PC-3 (cell line): ENCODE measurements at regions of chr2 and their contacts with region 1.

Region 1: DNA sequence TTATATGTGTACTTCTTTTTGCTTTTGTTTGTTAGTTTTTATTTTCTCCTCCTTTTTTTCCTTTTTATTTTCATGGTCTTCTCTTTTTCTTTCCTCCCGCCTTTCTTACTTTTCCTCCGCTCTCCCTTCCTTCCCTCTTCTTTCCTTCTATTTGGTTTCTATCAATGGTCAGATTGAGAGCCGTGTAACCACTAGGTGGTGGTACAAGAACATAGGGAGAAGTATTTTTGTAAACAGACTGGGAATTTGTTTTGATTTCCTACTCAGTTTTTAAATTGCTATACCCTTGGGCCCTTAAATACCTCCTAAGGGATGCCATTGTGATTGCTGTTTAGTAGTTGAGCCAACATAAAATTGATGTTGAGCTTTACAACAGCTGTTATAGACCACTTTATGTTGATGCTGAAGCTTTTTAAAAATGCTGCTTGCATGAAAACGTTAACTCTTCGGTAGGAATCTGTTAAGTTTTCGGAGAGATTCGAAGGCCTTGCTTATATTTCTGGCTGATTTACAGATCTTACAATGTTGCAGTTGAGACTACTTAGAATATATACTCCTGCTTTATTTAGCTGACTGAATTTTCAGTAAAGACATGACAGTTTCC is 124.2 kb downstream of the UBE2E3 start:
- DNase-seq: peak; percentile 81
- ATAC-seq: peak; percentile 59
- H3K4me3 ChIP-seq: no peak overlapping the region
- H3K27ac ChIP-seq: no peak overlapping the region
- H3K4me1 ChIP-seq: peaks cover 33% of the 10 kb centered on the region
- H3K27me3 ChIP-seq: no peaks in the 10 kb centered on the region
- CTCF ChIP-seq: peak; percentile 95

Region 2: GRCh38 chr2:180495606-180496005 is 609.0 kb before region 1 on chr2:
- CTCF ChIA-PET with region 1: no interaction called
- POLR2A ChIA-PET with region 1: no interaction called
- intact Hi-C with region 1: no loop called
- DNase-seq: peak; percentile 85
- ATAC-seq: peak; percentile 98
- H3K4me3 ChIP-seq: no peak overlapping the region
- H3K27ac ChIP-seq: peak overlapping the region; percentile 62
- H3K4me1 ChIP-seq: peaks cover 14% of the 10 kb centered on the region
- H3K27me3 ChIP-seq: no peaks in the 10 kb centered on the region
- CTCF ChIP-seq: no peak

Region 3: GRCh38 chr2:181312515-181312927 is 207.9 kb after region 1 on chr2:
- CTCF ChIA-PET with region 1: no interaction called
- POLR2A ChIA-PET with region 1: no interaction called
- intact Hi-C with region 1: loop called (anchors 10 kb)
- DNase-seq: no peak
- ATAC-seq: no peak
- H3K4me3 ChIP-seq: no peak overlapping the region
- H3K27ac ChIP-seq: no peak overlapping the region
- H3K4me1 ChIP-seq: no peaks in the 10 kb centered on the region
- H3K27me3 ChIP-seq: no peaks in the 10 kb centered on the region
- CTCF ChIP-seq: no peak

Region 4: DNA sequence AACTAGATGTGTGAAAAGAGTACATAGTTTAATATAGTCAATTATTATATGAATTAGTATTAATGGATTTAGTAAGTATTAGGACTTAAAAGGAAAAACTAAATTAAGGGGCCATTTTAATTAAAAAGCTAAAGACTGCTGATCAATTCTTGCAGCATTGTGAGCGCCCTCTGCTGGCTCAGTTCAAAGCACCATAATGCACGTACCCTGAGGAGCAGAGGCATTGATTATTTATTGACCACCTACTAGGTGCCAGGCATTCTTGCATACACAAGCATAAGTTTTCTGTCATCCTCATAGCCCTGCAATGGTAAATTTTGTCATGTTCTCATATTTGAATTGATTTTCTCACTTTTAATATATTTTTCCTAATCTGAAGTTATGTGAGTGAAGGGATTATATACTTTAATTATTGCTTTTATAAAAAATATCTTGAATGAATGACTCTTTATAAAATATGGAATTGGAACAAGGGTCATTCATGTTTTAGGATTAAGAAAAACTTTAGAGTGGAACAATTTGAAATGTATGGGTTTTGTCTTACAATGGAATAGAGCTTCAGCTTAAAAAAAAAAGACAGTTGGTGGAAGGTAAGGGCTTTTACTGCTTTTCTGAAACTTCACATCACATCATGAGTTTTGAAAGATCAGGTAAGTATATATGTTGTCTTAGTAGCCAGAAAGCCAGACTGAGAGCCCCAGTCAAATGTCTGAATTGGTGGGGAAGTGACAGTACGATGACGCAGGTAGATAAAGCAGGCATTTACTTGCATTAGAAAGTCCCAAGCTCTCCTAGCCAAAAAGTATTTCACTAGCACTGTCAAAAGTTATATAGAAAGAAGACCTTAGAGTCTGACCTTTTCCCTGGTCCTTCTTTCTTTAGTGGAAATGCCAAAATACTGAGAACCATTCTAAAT is 362.3 kb after region 1 on chr2:
- CTCF ChIA-PET with region 1: interaction called, 3 read pairs
- POLR2A ChIA-PET with region 1: no interaction called
- intact Hi-C with region 1: loop called (anchors 1 kb)
- DNase-seq: peak; percentile 67
- ATAC-seq: peak; percentile 50; the same call in 1 of the 2 replicates
- H3K4me3 ChIP-seq: no peak overlapping the region
- H3K27ac ChIP-seq: no peak overlapping the region
- H3K4me1 ChIP-seq: peaks cover 15% of the 10 kb centered on the region
- H3K27me3 ChIP-seq: no peaks in the 10 kb centered on the region
- CTCF ChIP-seq: peak; percentile 86

Region 5: DNA sequence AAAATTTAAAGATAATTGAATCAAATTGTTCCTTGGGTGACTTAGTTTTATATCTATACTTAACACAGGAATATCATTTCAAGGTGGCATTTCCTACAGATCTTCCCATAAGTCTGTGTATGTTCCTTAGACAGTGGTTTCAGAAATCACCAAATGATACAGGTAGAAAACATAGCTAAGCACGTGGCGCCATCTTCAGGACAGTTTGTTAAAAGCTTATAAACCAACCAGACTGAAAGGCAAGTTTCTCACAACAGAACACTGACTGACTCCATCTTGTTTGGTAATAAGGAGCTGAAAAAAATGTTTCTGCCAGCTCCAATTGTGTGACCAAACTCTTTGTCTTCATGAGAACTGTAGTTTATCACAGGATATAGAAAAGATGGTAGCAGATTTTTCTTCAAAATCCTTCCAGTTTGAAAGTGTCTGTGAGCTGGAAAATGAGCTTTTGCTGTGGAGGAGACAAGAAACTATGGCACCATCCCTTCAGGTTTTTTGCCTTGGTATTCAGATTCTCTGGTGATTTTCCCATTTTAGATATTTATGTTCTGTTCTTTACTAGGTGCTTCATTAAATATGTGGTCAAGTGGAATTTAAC is 610.5 kb after region 1 on chr2:
- CTCF ChIA-PET with region 1: interaction called, 9 read pairs
- POLR2A ChIA-PET with region 1: no interaction called
- intact Hi-C with region 1: loop called (anchors 1 kb)
- DNase-seq: peak; percentile 89
- ATAC-seq: peak; percentile 84
- H3K4me3 ChIP-seq: no peak overlapping the region
- H3K27ac ChIP-seq: no peak overlapping the region
- H3K4me1 ChIP-seq: no peaks in the 10 kb centered on the region
- H3K27me3 ChIP-seq: no peaks in the 10 kb centered on the region
- CTCF ChIP-seq: peak; percentile 92